ENCODE measurements at regions of chr1 and their contacts with region 1.

Region 1: DNA sequence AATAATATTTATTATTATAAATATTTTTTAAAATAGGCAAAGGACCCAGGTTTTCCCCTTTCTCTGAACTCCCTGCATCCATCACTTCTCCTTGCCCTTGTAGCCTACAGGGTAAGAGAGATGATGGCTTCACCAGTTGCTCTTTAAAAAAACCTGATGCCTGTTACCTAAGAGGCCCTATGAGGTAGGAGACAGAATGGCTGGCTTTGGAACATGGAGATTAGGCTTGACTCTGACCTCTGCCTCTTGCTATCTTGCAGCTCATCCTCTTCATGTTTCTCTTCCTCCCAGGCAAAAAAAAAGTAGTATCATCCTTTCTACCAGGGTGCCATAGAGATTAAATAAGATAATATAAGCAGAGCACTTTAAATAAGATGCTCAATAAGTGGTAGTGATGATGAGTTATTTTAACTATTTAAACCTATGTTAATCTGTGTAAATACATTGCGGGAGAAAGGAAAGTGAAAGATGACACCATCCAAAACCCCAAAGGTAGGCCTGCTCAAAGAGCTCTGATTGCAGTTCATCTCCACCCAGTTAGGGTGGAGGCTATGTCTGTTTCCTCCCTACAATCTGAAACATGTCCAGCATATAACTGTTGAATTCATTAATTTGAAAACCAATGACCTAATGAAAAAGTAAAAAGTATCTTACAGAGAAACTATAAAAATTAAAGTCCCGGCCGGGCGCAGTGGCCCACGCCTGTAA is 51.8 kb downstream of the RGS2 start:
- DNase-seq: no peak
- H3K4me3 ChIP-seq: no peak overlapping the region
- H3K27ac ChIP-seq: no peak overlapping the region
- H3K4me1 ChIP-seq: no peaks in the 10 kb centered on the region
- H3K27me3 ChIP-seq: no peaks in the 10 kb centered on the region
- CTCF ChIP-seq: no peak

Region 2: GRCh38 chr1:192256674-192257334 is 603.8 kb before region 1 on chr1:
- CTCF ChIA-PET with region 1: no interaction called
- POLR2A ChIA-PET with region 1: no interaction called
- intact Hi-C with region 1: no loop called
- DNase-seq: no peak
- H3K4me3 ChIP-seq: no peak overlapping the region
- H3K27ac ChIP-seq: no peak overlapping the region
- H3K4me1 ChIP-seq: no peaks in the 10 kb centered on the region
- H3K27me3 ChIP-seq: no peaks in the 10 kb centered on the region
- CTCF ChIP-seq: no peak

Region 3: DNA sequence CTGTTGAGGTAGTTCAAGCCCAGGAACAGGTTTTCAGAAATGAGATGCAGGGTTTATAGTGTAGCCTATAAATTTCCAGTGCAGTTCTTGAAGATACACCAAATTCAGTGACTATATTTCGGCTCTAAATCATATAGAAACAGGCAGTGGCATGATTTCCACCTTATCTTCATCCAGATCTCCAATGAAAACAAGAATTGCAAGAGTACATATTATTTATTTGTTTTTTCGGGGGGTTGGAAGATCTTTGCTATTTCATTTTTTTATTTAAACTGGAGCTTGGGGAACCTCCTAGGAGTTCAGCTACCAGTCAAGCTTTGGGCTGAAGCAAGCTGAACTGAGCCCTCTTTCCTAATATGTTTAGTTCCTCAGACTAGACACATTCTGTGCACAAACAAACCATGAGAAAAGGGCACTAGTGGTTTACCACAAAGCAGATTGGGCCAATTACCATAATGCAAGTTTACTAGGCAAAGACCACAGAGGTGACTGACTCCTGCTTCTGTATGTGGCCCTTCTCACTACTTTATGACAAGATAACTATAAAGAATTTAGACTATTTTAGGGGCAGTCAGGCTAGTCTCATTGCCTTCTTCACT is 16.8 kb after region 1 on chr1:
- CTCF ChIA-PET with region 1: no interaction called
- POLR2A ChIA-PET with region 1: no interaction called
- intact Hi-C with region 1: no loop called
- DNase-seq: no peak
- H3K4me3 ChIP-seq: no peak overlapping the region
- H3K27ac ChIP-seq: no peak overlapping the region
- H3K4me1 ChIP-seq: no peaks in the 10 kb centered on the region
- H3K27me3 ChIP-seq: no peaks in the 10 kb centered on the region
- CTCF ChIP-seq: no peak

Region 4: GRCh38 chr1:193190096-193190744 is 329.6 kb after region 1 on chr1:
- CTCF ChIA-PET with region 1: no interaction called
- POLR2A ChIA-PET with region 1: interaction called, 16 read pairs
- intact Hi-C with region 1: no loop called
- DNase-seq: no peak
- H3K4me3 ChIP-seq: no peak overlapping the region
- H3K27ac ChIP-seq: no peak overlapping the region
- H3K4me1 ChIP-seq: peaks cover 4% of the 10 kb centered on the region; the same call in 1 of the 2 replicates
- H3K27me3 ChIP-seq: no peaks in the 10 kb centered on the region
- CTCF ChIP-seq: no peak

Region 5: GRCh38 chr1:194043984-194044755 is 1183.5 kb after region 1 on chr1:
- CTCF ChIA-PET with region 1: no interaction called
- POLR2A ChIA-PET with region 1: no interaction called
- intact Hi-C with region 1: no loop called
- DNase-seq: no peak
- H3K4me3 ChIP-seq: no peak overlapping the region
- H3K27ac ChIP-seq: no peak overlapping the region
- H3K4me1 ChIP-seq: no peaks in the 10 kb centered on the region
- H3K27me3 ChIP-seq: no peaks in the 10 kb centered on the region
- CTCF ChIP-seq: no peak

Measured in PC-9 (cell line).